Heart left ventricle (tissue), 16 donors: ENCODE measurements at regions of chr12 and their contacts with region 1.

Region 1: GRCh38 chr12:53014709-53015108 is 8.5 kb downstream of the EIF4B start:
- DNase-seq: no peak
- ATAC-seq: no peak
- H3K4me3 ChIP-seq: no peak overlapping the region
- H3K27ac ChIP-seq: no peak overlapping the region
- H3K4me1 ChIP-seq: peaks cover 0 to 41% (median 8%) of the 10 kb centered on the region in 12 donors
- H3K27me3 ChIP-seq: no peaks in the 10 kb centered on the region
- CTCF ChIP-seq: no peak
- POLR2A ChIP-seq: no peak

Region 2: DNA sequence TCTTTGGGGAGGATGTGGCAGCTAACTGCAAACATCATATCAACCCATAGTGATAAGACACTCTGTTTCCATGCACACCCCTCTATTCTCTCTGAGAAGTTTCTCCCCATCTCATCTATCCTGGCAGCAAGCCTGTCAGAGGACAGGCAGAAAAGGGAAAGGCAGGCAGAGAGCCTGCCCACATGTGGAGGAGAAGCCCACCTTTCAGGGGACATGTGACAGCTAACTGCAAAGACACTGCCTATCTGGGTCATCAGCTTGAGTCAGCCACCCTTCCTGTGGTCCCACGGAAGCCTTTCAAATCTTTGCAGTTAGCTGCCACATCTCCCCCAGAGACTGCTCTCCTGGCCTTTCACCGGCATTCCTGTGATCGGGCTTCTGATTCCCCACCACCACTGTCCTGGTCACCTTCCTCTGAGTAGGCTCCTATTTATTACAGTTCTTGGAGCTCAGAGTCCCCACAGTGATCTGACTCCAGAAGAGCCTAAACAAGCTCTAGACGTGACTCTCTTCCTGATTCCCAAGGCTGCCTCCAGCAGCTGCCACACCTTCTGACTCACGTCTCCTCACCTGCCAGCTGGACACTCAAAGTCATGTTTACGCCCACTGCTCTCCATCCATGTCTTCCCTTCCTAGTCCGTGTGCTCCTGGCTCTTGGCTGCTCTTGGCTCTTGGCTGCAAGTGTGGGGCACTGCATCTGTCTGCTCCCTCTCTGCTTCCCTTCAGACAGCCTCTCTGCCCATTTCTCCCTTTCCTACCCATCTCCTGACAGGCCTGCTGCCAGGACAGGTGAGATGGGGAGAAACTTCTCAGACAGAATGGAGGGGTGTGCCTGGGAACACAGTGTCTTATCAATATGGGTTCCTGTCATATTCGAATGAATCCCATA is 327.0 kb before region 1 on chr12:
- intact Hi-C with region 1: no loop called
- DNase-seq: no peak
- ATAC-seq: no peak
- H3K4me3 ChIP-seq: no peak overlapping the region
- H3K27ac ChIP-seq: no peak overlapping the region
- H3K4me1 ChIP-seq: peaks cover 0 to 10% (median 4%) of the 10 kb centered on the region in 12 donors
- H3K27me3 ChIP-seq: peaks cover 9 to 69% (median 30%) of the 10 kb centered on the region in 9 donors
- CTCF ChIP-seq: no peak
- POLR2A ChIP-seq: no peak

Region 3: DNA sequence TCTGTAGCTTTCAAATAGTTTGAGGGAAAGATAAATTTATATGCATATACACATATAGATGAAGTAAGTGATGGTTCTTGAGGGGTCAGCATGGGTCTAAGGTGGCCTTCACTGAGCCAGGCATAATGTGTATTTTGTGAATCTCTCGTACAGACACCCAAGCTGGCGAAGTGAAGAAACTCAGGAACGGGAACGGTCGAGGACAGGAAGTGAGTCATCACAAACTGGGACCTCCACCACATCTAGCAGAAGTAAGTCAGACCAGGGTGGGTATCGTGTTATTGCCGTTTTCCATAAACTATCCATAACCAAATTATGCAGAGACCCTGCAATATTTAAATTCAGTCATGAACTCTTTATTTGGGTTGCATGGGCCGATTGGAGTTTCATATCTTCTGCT is 19.8 kb after region 1 on chr12:
- intact Hi-C with region 1: loop called in 1 of 10 experiments (anchors 2 kb)
- DNase-seq: no peak
- ATAC-seq: no peak
- H3K4me3 ChIP-seq: no peak overlapping the region
- H3K27ac ChIP-seq: peak overlapping the region in 1 of 12 donors; percentile 0
- H3K4me1 ChIP-seq: peaks cover 0 to 33% (median 11%) of the 10 kb centered on the region in 12 donors
- H3K27me3 ChIP-seq: no peaks in the 10 kb centered on the region
- CTCF ChIP-seq: no peak
- POLR2A ChIP-seq: no peak